ENCODE measurements at regions of chr20 and their contacts with region 1.

Region 1: DNA sequence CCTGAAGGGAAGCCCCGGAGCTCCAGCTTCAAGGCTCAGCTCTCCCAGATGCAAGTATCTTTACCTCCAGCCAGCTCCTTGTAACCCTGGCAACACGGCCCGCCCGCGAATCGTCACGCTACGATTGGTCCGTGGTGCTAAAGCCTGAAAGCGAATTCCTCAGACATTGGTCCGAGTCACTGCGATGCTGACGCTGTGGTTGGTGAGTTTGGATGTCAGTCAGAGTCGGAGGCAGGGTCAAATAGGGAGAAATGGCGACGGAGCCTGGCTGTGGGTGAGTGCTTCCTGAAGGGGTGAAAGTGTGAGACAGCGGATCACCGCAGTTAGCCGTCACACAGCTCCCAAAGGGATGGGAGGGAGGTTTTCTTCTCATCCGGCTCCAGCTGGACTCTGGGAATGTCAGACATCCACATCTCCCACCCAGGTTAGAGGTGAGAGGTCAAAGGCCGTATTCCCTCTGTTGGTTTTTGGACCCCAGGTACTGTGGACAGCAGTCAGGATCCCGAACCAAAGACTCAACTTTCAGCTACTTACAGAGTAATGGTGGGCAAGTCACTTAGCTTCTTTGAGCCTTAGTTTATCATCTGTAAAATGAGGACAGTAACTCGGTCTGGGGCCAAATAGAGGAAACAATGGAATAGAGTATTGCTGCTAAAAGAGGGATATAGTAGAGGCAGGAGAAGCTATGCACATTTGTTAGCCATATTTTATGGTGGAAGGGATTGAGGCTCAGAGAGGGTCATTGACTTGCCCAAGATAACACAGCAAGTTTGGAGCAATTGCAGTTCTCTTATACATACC is at the start of gene ZSWIM1:
- DNase-seq: peak; percentile 100
- H3K4me3 ChIP-seq: peak within 1 kb of the TSS; percentile 56 to 67
- H3K27ac ChIP-seq: peak within 1 kb of the TSS; percentile 81 to 83
- H3K4me1 ChIP-seq: peaks cover 0 to 17% (median 13%) of the 10 kb centered on the region in 4 donors
- H3K27me3 ChIP-seq: no peaks in the 10 kb centered on the region
- CTCF ChIP-seq: peak in 1 of 2 experiments; percentile 19

Region 2: GRCh38 chr20:45672765-45673164 is 208.4 kb before region 1 on chr20:
- intact Hi-C with region 1: no loop called
- DNase-seq: no peak
- H3K4me3 ChIP-seq: no peak overlapping the region
- H3K27ac ChIP-seq: no peak overlapping the region
- H3K4me1 ChIP-seq: no peaks in the 10 kb centered on the region
- H3K27me3 ChIP-seq: no peaks in the 10 kb centered on the region
- CTCF ChIP-seq: no peak

Region 3: DNA sequence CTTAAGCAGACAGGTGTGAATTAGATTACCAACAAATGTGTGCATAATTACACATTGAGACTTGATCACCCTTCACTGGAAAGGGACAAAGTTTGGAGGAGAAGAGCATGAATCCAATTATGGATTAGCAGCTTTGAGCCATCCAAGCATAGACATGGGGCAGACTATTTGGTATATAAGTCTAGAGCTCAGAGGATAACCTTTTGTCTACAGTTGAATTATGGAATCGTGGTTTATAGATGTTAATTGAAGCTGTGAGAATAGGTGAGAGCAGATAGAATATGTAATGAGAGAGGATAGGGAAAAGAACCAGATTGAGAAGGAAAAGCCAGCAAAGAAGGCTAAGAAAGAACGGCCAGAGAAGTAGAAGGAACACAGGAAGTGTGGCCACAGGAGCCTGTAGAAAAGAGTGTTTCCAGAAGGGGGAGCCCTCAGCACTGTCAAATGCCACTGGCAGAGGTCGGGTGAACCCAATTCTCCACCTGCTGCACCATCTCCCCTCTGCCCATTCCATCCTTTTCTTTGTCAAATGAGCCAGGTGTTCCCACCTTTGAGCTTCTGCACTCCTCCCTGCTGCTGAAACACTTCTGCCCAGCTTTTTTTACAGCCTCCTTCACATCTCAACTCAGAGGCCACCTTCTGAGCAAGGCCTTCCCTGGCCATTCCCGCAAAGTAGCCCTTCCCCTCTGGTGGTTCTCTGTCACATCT is 82.1 kb before region 1 on chr20:
- intact Hi-C with region 1: loop called (anchors 10 kb)
- DNase-seq: peak; percentile 54 to 73
- H3K4me3 ChIP-seq: no peak overlapping the region
- H3K27ac ChIP-seq: peak overlapping the region; percentile 23 to 40
- H3K4me1 ChIP-seq: no peaks in the 10 kb centered on the region
- H3K27me3 ChIP-seq: no peaks in the 10 kb centered on the region
- CTCF ChIP-seq: peak; percentile 69 to 75

Region 4: GRCh38 chr20:46914789-46915379 is 1033.7 kb after region 1 on chr20:
- intact Hi-C with region 1: no loop called
- DNase-seq: peak in 1 of 2 donors; percentile 64
- H3K4me3 ChIP-seq: no peak overlapping the region
- H3K27ac ChIP-seq: no peak overlapping the region
- H3K4me1 ChIP-seq: no peaks in the 10 kb centered on the region
- H3K27me3 ChIP-seq: peaks cover 0 to 10% of the 10 kb centered on the region in 2 donors
- CTCF ChIP-seq: no peak